Testis (tissue), 5 donors: ENCODE measurements at regions of chr9 and their contacts with region 1.

Region 1: GRCh38 chr9:130682490-130683121 is 11.0 kb upstream of the EXOSC2 start:
- DNase-seq: peak; percentile 87
- H3K4me3 ChIP-seq: peak overlapping the region; percentile 48 to 58
- H3K27ac ChIP-seq: no peak overlapping the region
- H3K4me1 ChIP-seq: peaks cover 8% of the 10 kb centered on the region
- H3K27me3 ChIP-seq: no peaks in the 10 kb centered on the region
- CTCF ChIP-seq: peak; percentile 74 to 84 (median 78)
- POLR2A ChIP-seq: no peak

Region 2: DNA sequence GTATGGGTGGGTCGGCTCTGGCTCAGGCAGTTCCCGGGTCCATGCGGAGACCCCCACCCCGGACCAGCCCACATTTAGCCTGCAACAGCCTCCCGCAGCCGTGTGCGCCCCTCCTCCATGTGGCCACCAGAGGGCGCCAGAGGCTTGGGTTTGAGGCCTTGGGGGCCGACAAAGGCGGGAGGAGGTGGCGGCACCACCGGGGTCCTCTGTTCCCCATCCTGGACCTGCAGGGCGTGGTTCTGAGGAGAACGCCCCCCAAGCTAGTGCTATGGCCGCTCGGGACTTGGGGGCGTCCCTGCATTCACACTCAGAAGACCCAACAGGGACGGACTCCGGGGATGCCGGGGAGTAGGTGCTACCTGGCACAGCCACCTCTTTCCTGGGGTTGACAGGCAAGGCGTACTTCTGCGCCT is 221.4 kb before region 1 on chr9:
- intact Hi-C with region 1: loop called (anchors 2 kb)
- DNase-seq: peak; percentile 74
- H3K4me3 ChIP-seq: no peak overlapping the region
- H3K27ac ChIP-seq: no peak overlapping the region
- H3K4me1 ChIP-seq: no peaks in the 10 kb centered on the region
- H3K27me3 ChIP-seq: no peaks in the 10 kb centered on the region
- CTCF ChIP-seq: peak; percentile 89 to 95 (median 90)
- POLR2A ChIP-seq: no peak